Mammary epithelial cell (primary cell): ENCODE measurements at regions of chr4 and their contacts with region 1.

Region 1: DNA sequence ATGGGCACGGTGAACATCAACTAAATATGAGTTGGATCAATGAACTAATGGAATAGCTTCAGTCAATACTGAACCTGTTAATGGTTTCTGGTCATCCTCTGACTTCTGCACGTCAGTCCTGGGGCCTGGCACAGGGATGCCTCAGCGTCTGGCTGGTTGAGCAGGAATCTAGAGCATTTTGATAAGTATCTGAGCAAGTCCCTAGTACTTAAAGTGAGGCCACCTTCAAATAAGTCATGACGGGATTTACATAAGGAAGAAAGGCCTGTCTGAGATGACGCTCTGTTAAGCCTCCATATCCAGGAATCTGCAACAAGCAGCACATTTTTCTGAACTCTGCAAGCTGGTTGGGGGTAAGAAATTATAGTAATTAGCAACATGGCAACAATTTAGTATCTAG is 83.2 kb upstream of the TBC1D9 start:
- DNase-seq: no peak
- H3K4me3 ChIP-seq: no peak overlapping the region
- H3K27ac ChIP-seq: no peak overlapping the region
- H3K4me1 ChIP-seq: no peaks in the 10 kb centered on the region
- H3K27me3 ChIP-seq: peaks cover 3% of the 10 kb centered on the region
- CTCF ChIP-seq: no peak

Region 2: GRCh38 chr4:140584439-140584838 is 255.0 kb before region 1 on chr4:
- CTCF ChIA-PET with region 1: interaction called, 10 read pairs
- dilution Hi-C with region 1: no loop called
- in situ Hi-C with region 1: no loop called
- intact Hi-C with region 1: no loop called
- DNase-seq: no peak
- H3K4me3 ChIP-seq: no peak overlapping the region
- H3K27ac ChIP-seq: no peak overlapping the region
- H3K4me1 ChIP-seq: peaks cover under 1% of the 10 kb centered on the region
- H3K27me3 ChIP-seq: peaks cover 17% of the 10 kb centered on the region
- CTCF ChIP-seq: no peak